CD8-positive, alpha-beta T cell (primary cell): ENCODE measurements at regions of chr14 and their contacts with region 1.

Region 1: GRCh38 chr14:61694830-61695694 is at the start of gene HIF1A:
- DNase-seq: peak; percentile 88 to 100 (median 94)
- ATAC-seq: peak; percentile 95
- H3K4me3 ChIP-seq: peak within 1 kb of the TSS; percentile 76 to 87
- H3K4me3 Mint-ChIP-seq: peak within 1 kb of the TSS; percentile 95
- H3K27ac ChIP-seq: peak within 1 kb of the TSS; percentile 83 to 86
- H3K27ac Mint-ChIP-seq: peak within 1 kb of the TSS; percentile 96
- H3K4me1 ChIP-seq: peaks cover 47% of the 10 kb centered on the region
- H3K4me1 Mint-ChIP-seq: peaks cover 59% of the 10 kb centered on the region
- H3K27me3 ChIP-seq: no peaks in the 10 kb centered on the region
- H3K27me3 Mint-ChIP-seq: no peaks in the 10 kb centered on the region
- CTCF ChIP-seq: no peak
- total RNA-seq, gene HIF1A: 335 to 340 TPM

Region 2: GRCh38 chr14:61342486-61342885 is 352.6 kb before region 1 on chr14:
- CTCF ChIA-PET with region 1: no interaction called
- POLR2A ChIA-PET with region 1: no interaction called
- intact Hi-C with region 1: loop called in 1 of 2 experiments (anchors 5 kb)
- DNase-seq: peak; percentile 60 to 94 (median 85)
- ATAC-seq: peak; percentile 49
- H3K4me3 ChIP-seq: peak overlapping the region in 1 of 2 experiments; percentile 25
- H3K4me3 Mint-ChIP-seq: peak overlapping the region; percentile 77
- H3K27ac ChIP-seq: peak overlapping the region; percentile 39 to 77
- H3K27ac Mint-ChIP-seq: peak overlapping the region; percentile 99
- H3K4me1 ChIP-seq: peaks cover 94% of the 10 kb centered on the region
- H3K4me1 Mint-ChIP-seq: peaks cover 95% of the 10 kb centered on the region
- H3K27me3 ChIP-seq: no peaks in the 10 kb centered on the region
- H3K27me3 Mint-ChIP-seq: no peaks in the 10 kb centered on the region
- CTCF ChIP-seq: no peak

Region 3: DNA sequence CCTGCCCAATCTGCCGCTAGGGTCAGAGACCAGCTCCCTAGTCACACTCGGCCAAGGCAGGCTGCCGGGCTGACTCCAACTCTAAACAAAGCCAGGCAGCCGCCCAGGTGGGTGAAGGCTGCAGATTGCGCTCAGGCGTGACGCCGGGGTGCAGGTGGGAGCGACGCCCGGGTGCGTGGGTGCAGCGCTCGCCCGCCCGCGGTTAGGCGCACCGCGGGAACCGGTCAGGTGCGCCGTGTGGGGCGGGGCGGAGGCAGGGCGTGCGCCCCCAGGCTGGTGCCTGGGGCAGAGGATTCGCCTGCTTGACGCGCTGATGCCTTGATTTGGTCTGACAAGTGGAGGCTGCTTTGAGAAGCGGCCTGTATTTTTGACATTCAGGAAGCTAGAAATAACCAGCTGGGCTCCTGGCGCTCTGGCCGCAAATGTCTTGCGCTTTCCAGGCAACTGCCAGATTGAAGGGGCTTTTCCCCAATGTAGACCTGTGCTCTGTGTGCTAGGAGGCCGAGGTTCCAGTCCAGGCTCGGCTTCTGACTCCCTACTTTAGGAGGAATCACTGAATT is 126.4 kb before region 1 on chr14:
- CTCF ChIA-PET with region 1: no interaction called
- POLR2A ChIA-PET with region 1: interaction called, 5 read pairs
- intact Hi-C with region 1: loop called in 1 of 2 experiments (anchors 5 kb)
- DNase-seq: peak; percentile 22 to 77 (median 68)
- ATAC-seq: peak; percentile 73
- H3K4me3 ChIP-seq: peak overlapping the region; percentile 10 to 17
- H3K4me3 Mint-ChIP-seq: peak overlapping the region; percentile 71
- H3K27ac ChIP-seq: no peak overlapping the region
- H3K27ac Mint-ChIP-seq: peak overlapping the region; percentile 86
- H3K4me1 ChIP-seq: peaks cover 30% of the 10 kb centered on the region
- H3K4me1 Mint-ChIP-seq: peaks cover 45% of the 10 kb centered on the region
- H3K27me3 ChIP-seq: no peaks in the 10 kb centered on the region
- H3K27me3 Mint-ChIP-seq: no peaks in the 10 kb centered on the region
- CTCF ChIP-seq: no peak

Region 4: DNA sequence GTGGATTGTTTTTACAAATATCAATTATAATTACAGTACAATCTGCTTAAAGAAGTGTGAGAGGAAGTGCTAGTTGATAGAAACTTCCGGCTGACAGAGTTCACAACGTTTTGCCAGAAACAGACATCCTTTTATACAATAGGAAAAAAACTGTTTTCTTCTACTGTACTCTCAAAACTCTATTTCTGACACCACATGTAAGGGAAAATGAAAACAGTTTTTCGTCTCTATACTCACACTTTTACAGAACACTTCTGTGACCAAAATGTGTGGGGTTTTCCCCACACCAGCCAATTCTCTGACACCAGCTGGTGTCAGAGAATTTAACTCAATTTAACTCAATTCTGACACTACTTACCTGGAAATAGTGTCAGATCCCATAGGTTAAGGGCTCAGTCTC is 24.0 kb before region 1 on chr14:
- CTCF ChIA-PET with region 1: interaction called, 3 read pairs
- POLR2A ChIA-PET with region 1: no interaction called
- intact Hi-C with region 1: loop called (anchors 1 kb)
- DNase-seq: peak in 4 of 9 experiments; percentile 22 to 89 (median 68)
- ATAC-seq: peak; percentile 94
- H3K4me3 ChIP-seq: peak overlapping the region; percentile 6 to 21
- H3K4me3 Mint-ChIP-seq: no peak overlapping the region
- H3K27ac ChIP-seq: peak overlapping the region; percentile 67 to 98
- H3K27ac Mint-ChIP-seq: no peak overlapping the region
- H3K4me1 ChIP-seq: peaks cover 65% of the 10 kb centered on the region
- H3K4me1 Mint-ChIP-seq: peaks cover 13% of the 10 kb centered on the region
- H3K27me3 ChIP-seq: no peaks in the 10 kb centered on the region
- H3K27me3 Mint-ChIP-seq: no peaks in the 10 kb centered on the region
- CTCF ChIP-seq: no peak

Region 5: GRCh38 chr14:61719344-61720293 is 24.6 kb after region 1 on chr14:
- CTCF ChIA-PET with region 1: interaction called, 3 read pairs
- POLR2A ChIA-PET with region 1: interaction called, 7 read pairs
- intact Hi-C with region 1: loop called (anchors 2 kb)
- DNase-seq: peak in 3 of 9 experiments; percentile 10 to 66 (median 47)
- ATAC-seq: peak; percentile 84
- H3K4me3 ChIP-seq: no peak overlapping the region
- H3K4me3 Mint-ChIP-seq: peak overlapping the region; percentile 46
- H3K27ac ChIP-seq: peak overlapping the region in 1 of 2 experiments; percentile 27
- H3K27ac Mint-ChIP-seq: peak overlapping the region; percentile 88
- H3K4me1 ChIP-seq: peaks cover 47% of the 10 kb centered on the region
- H3K4me1 Mint-ChIP-seq: peaks cover 68% of the 10 kb centered on the region
- H3K27me3 ChIP-seq: no peaks in the 10 kb centered on the region
- H3K27me3 Mint-ChIP-seq: no peaks in the 10 kb centered on the region
- CTCF ChIP-seq: no peak

Region 6: DNA sequence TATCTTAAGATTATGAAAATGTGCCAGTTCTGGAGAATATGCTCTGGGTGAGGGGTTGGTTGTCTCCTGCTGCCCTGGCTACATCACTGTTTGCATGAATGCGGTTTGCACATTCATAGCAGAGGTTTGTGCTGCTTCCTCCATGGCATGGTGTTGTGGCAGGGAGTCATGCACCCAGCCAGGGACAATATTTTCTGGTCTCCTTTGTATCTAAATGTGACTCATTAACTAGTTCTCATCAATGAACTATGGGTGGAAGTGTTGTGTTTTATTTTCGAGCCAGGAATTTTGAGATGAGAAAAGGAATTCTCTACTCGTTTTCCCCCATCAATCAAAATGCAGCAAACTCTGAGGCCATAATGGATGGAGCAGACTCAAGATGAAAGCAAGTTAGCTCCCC is 594.4 kb after region 1 on chr14:
- CTCF ChIA-PET with region 1: no interaction called
- POLR2A ChIA-PET with region 1: no interaction called
- intact Hi-C with region 1: no loop called
- DNase-seq: no peak
- ATAC-seq: no peak
- H3K4me3 ChIP-seq: no peak overlapping the region
- H3K4me3 Mint-ChIP-seq: no peak overlapping the region
- H3K27ac ChIP-seq: no peak overlapping the region
- H3K27ac Mint-ChIP-seq: no peak overlapping the region
- H3K4me1 ChIP-seq: no peaks in the 10 kb centered on the region
- H3K4me1 Mint-ChIP-seq: no peaks in the 10 kb centered on the region
- H3K27me3 ChIP-seq: no peaks in the 10 kb centered on the region
- H3K27me3 Mint-ChIP-seq: no peaks in the 10 kb centered on the region
- CTCF ChIP-seq: no peak